ENCODE measurements at regions of chr9 and their contacts with region 1.

Region 1: GRCh38 chr9:35790385-35791296 is 750 bp upstream of the NPR2 start:
- DNase-seq: peak; percentile 52 to 64 (median 62)
- H3K4me3 ChIP-seq: no peak overlapping the region
- H3K4me3 Mint-ChIP-seq: peak overlapping the region; percentile 34 to 74
- H3K27ac ChIP-seq: no peak overlapping the region
- H3K27ac Mint-ChIP-seq: no peak overlapping the region
- H3K4me1 ChIP-seq: no peaks in the 10 kb centered on the region
- H3K4me1 Mint-ChIP-seq: peaks cover 11% of the 10 kb centered on the region
- H3K27me3 ChIP-seq: peaks cover 0 to 13% of the 10 kb centered on the region in 2 donors
- H3K27me3 Mint-ChIP-seq: peaks cover 15 to 23% (median 15%) of the 10 kb centered on the region in 3 donors
- CTCF ChIP-seq: peak; percentile 82

Region 2: DNA sequence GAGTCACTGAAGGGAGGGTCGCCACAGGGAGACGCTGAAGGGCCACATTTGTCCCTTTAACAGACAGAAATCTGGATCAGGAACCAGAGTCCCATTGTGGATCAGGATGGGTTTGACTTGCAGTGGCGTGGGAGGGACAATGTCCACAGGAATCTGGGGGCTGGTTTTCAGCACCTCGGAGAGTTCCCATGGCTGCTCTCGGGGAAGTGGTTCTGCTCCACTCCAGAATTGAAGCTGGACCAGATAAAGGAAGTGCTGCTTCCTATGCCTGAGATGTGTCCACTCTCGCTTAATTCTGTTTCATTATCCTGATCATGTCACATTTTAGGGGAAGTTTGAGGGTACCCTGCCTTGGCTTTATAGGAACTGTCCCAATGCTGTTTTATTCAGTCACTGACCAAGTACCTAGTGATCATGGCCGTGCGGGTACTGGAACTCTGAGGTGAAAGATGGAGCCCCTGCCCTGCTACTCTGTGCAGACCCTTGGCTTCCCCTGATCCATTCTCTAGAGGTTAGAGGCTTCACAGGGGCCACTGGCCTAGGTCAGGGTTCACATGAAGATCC is 1296.6 kb before region 1 on chr9:
- intact Hi-C with region 1: no loop called
- DNase-seq: peak in 1 of 3 donors; percentile 12
- H3K4me3 ChIP-seq: no peak overlapping the region
- H3K4me3 Mint-ChIP-seq: no peak overlapping the region
- H3K27ac ChIP-seq: no peak overlapping the region
- H3K27ac Mint-ChIP-seq: no peak overlapping the region
- H3K4me1 ChIP-seq: no peaks in the 10 kb centered on the region
- H3K4me1 Mint-ChIP-seq: no peaks in the 10 kb centered on the region
- H3K27me3 ChIP-seq: peaks cover 0 to 3% of the 10 kb centered on the region in 2 donors
- H3K27me3 Mint-ChIP-seq: peaks cover 5 to 7% (median 6%) of the 10 kb centered on the region in 3 donors
- CTCF ChIP-seq: no peak

Region 3: GRCh38 chr9:35882263-35882848 is 91.7 kb after region 1 on chr9:
- intact Hi-C with region 1: loop called (anchors 1 to 5 kb)
- DNase-seq: peak; percentile 61 to 71 (median 62)
- H3K4me3 ChIP-seq: no peak overlapping the region
- H3K4me3 Mint-ChIP-seq: no peak overlapping the region
- H3K27ac ChIP-seq: no peak overlapping the region
- H3K27ac Mint-ChIP-seq: no peak overlapping the region
- H3K4me1 ChIP-seq: no peaks in the 10 kb centered on the region
- H3K4me1 Mint-ChIP-seq: no peaks in the 10 kb centered on the region
- H3K27me3 ChIP-seq: peaks cover 3 to 6% of the 10 kb centered on the region in 2 donors
- H3K27me3 Mint-ChIP-seq: peaks cover 14 to 16% (median 15%) of the 10 kb centered on the region in 3 donors
- CTCF ChIP-seq: peak; percentile 99